ENCODE measurements at regions of chrX and their contacts with region 1.

Region 1: GRCh38 chrX:119067023-119067739 is 5.6 kb upstream of the CT47C1 start:
- DNase-seq: peak in 4 of 5 donors; percentile 18 to 48 (median 36)
- ATAC-seq: peak in 3 of 4 donors; percentile 72 to 80 (median 79)
- H3K4me3 ChIP-seq: no peak overlapping the region
- H3K27ac ChIP-seq: no peak overlapping the region
- H3K4me1 ChIP-seq: peaks cover 0 to 6% (median 0%) of the 10 kb centered on the region in 12 donors
- H3K27me3 ChIP-seq: peaks cover 0 to 12% (median 0%) of the 10 kb centered on the region in 9 donors
- CTCF ChIP-seq: peak; percentile 39 to 70 (median 60)
- POLR2A ChIP-seq: no peak

Region 2: DNA sequence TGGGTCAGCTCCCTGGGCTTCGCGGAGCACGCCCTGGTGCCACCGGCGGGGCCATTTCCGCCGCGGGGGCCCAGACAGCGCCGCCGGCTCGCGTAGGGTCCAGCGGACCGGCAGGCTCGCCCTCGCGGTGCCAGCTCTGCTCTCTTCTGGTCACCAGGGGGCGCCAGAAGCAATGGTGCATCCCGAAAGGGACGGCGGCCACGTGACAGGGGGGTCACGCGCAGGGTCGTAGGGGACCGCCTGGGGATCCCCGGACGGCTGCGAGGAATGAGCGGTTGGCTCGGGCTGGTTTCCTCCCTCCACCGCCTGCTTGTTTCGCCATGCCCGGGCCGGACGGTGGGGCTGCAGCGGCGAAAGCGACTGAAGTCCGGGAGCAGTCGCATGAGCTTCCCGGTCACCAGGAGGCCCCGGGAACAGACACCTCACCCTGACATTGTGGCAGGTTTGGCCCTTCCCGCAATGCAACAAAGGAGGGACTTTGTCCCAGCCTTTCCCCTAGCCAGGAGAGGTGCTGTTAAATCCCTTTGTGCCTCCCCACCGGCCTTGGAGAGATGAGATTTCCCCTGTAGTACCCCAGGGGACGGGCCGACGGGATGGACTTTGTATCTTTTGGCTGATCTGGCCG is 227.7 kb before region 1 on chrX:
- intact Hi-C with region 1: loop called in 1 of 10 experiments (anchors 2 kb)
- DNase-seq: peak; percentile 77 to 90 (median 84)
- ATAC-seq: peak; percentile 87 to 96 (median 95)
- H3K4me3 ChIP-seq: peak overlapping the region in 11 of 12 donors; percentile 16 to 74 (median 56)
- H3K27ac ChIP-seq: peak overlapping the region in 2 of 12 donors; percentile 4 to 29
- H3K4me1 ChIP-seq: peaks cover 0 to 7% (median 0%) of the 10 kb centered on the region in 12 donors
- H3K27me3 ChIP-seq: peaks cover 0 to 16% (median 0%) of the 10 kb centered on the region in 9 donors
- CTCF ChIP-seq: peak; percentile 60 to 87 (median 74)
- POLR2A ChIP-seq: no peak

Region 3: GRCh38 chrX:118974088-118974907 is 92.9 kb before region 1 on chrX and contains the start of gene LONRF3:
- intact Hi-C with region 1: no loop called
- DNase-seq: peak; percentile 66 to 84 (median 68)
- ATAC-seq: peak; percentile 43 to 77 (median 56)
- H3K4me3 ChIP-seq: peak within 1 kb of the TSS; percentile 23 to 78 (median 60)
- H3K27ac ChIP-seq: peak within 1 kb of the TSS in 11 of 12 donors; percentile 36 to 87 (median 62)
- H3K4me1 ChIP-seq: peaks cover 0 to 21% (median 1%) of the 10 kb centered on the region in 12 donors
- H3K27me3 ChIP-seq: peaks cover 0 to 20% (median 0%) of the 10 kb centered on the region in 9 donors
- CTCF ChIP-seq: no peak
- POLR2A ChIP-seq: peak in 1 of 2 donors; percentile 78
- total RNA-seq, gene LONRF3: 1.3 to 8.3 (median 2.1) TPM

Region 4: DNA sequence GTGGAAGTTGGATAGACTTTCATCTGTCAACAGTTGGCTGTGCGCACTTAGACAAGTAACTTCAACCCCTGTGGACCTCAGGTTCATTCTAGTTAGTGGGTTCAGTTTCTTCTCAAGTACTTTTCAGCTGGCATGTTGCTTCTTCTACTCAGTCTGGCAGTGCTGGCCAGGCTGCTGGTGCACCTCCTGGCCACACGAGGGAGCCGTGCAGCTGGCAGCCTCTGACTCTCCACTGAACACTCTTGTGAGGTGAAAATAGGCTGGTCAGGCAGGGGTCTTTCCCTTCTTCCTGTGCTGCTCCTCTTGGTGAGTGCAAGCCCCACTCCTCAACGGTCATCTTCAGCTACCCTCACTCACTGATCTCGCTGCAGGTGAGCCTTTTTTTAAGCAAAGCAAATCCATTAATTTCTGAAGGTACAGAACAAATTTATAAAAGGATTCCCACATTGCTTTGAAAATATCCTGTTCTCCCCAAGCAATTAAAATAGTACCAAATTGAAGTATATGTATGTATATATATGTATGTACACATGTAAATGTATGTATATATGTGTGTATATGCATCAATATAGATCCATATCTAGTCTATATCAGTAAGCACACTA is 62.2 kb before region 1 on chrX:
- intact Hi-C with region 1: loop called (anchors 2 to 5 kb)
- DNase-seq: peak; percentile 25 to 72 (median 39)
- ATAC-seq: peak in 3 of 4 donors; percentile 72 to 83 (median 79)
- H3K4me3 ChIP-seq: no peak overlapping the region
- H3K27ac ChIP-seq: no peak overlapping the region
- H3K4me1 ChIP-seq: peaks cover 0 to 18% (median 0%) of the 10 kb centered on the region in 12 donors
- H3K27me3 ChIP-seq: peaks cover 0 to 9% (median 0%) of the 10 kb centered on the region in 9 donors
- CTCF ChIP-seq: peak; percentile 62 to 92 (median 76)
- POLR2A ChIP-seq: no peak

Region 5: GRCh38 chrX:119013164-119013563 is 54.0 kb before region 1 on chrX:
- intact Hi-C with region 1: loop called in 7 of 10 experiments (anchors 5 kb)
- DNase-seq: no peak
- ATAC-seq: no peak
- H3K4me3 ChIP-seq: no peak overlapping the region
- H3K27ac ChIP-seq: no peak overlapping the region
- H3K4me1 ChIP-seq: peaks cover 0 to 22% (median 0%) of the 10 kb centered on the region in 12 donors
- H3K27me3 ChIP-seq: no peaks in the 10 kb centered on the region
- CTCF ChIP-seq: no peak
- POLR2A ChIP-seq: no peak

Measured in heart left ventricle (tissue), 16 donors.